Vagina (tissue), 2 donors: ENCODE measurements at regions of chr19 and their contacts with region 1.

Region 1: DNA sequence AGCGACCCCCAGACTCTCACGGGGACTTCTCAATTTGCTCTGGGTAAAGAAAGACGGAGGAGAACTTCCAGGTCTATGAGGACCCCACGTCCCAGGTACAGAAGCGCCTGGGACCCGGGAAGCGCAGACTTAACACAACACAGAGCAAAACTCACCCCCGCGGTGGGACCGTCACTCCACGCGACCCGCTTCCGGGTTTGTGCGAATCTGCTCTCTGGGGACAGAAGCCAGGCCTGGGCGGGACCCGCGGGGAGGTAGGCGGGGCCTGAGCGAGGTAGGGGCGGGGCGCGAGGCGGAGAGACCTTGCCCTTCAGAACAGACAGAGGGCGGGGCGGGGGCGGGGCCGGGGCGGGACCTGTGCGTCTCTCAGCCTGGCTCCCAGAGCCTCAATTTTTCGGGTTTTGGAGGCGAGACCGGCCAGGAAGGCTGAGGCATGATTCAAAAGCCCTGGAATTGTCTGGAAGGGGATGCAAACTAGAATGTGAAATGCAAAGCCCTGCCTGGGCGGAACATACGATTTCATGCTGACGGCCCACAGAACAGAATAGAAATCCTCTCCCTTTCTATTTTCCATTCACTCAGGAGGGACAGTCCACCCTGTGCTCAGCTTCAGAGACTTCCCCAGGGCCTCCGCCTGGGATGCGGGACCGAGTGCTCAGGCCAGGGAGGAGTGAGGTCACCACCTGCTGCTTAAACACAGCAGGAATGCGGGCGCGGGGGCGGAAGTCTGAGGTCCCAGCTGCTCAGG is 19.3 kb upstream of the ZNF888 start:
- DNase-seq: peak in 1 of 2 donors; percentile 95
- H3K4me3 ChIP-seq: peak overlapping the region; percentile 56 to 91
- H3K27ac ChIP-seq: peak overlapping the region; percentile 79
- H3K4me1 ChIP-seq: peaks cover 28% of the 10 kb centered on the region
- H3K27me3 ChIP-seq: no peaks in the 10 kb centered on the region
- CTCF ChIP-seq: no peak
- POLR2A ChIP-seq: peak in 1 of 2 donors; percentile 65

Region 2: GRCh38 chr19:51742789-51743188 is 1199.8 kb before region 1 on chr19:
- intact Hi-C with region 1: no loop called
- DNase-seq: no peak
- H3K4me3 ChIP-seq: no peak overlapping the region
- H3K27ac ChIP-seq: no peak overlapping the region
- H3K4me1 ChIP-seq: no peaks in the 10 kb centered on the region
- H3K27me3 ChIP-seq: no peaks in the 10 kb centered on the region
- CTCF ChIP-seq: no peak
- POLR2A ChIP-seq: no peak

Region 3: GRCh38 chr19:52898081-52898480 is 44.5 kb before region 1 on chr19:
- intact Hi-C with region 1: loop called (anchors 1 kb)
- DNase-seq: no peak
- H3K4me3 ChIP-seq: peak overlapping the region; percentile 61 to 77
- H3K27ac ChIP-seq: peak overlapping the region; percentile 85
- H3K4me1 ChIP-seq: peaks cover 17% of the 10 kb centered on the region
- H3K27me3 ChIP-seq: no peaks in the 10 kb centered on the region
- CTCF ChIP-seq: no peak
- POLR2A ChIP-seq: no peak

Region 4: DNA sequence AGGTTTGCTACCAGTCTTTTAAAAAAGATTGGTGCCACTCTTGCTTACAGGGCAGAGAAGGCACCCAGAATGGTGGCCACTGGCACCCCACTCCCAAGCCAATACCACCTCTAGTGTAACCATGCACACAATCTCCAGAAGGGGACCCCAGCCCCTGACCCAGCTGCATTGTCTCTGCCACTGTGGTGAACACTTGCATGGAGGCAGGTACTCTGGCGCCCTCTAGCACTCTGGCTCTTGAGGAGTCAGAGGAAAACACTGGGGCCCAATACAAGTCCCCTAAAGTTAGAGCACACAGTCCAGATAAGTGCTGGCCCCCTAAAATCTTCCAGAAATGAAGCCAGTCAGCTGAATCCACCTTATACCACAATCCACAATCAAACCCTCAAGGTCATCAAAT is 77.1 kb after region 1 on chr19:
- intact Hi-C with region 1: no loop called
- DNase-seq: no peak
- H3K4me3 ChIP-seq: no peak overlapping the region
- H3K27ac ChIP-seq: no peak overlapping the region
- H3K4me1 ChIP-seq: no peaks in the 10 kb centered on the region
- H3K27me3 ChIP-seq: no peaks in the 10 kb centered on the region
- CTCF ChIP-seq: no peak
- POLR2A ChIP-seq: no peak